ENCODE measurements at regions of chr6 and their contacts with region 1.

Region 1: GRCh38 chr6:148166339-148166968 is 176.2 kb upstream of the SASH1 start:
- DNase-seq: peak in 1 of 2 experiments; percentile 58
- H3K4me3 ChIP-seq: no peak overlapping the region
- H3K27ac ChIP-seq: no peak overlapping the region
- H3K4me1 ChIP-seq: no peaks in the 10 kb centered on the region
- H3K27me3 ChIP-seq: no peaks in the 10 kb centered on the region
- CTCF ChIP-seq: peak; percentile 83

Region 2: GRCh38 chr6:147390909-147391536 is 775.4 kb before region 1 on chr6:
- CTCF ChIA-PET with region 1: no interaction called
- POLR2A ChIA-PET with region 1: no interaction called
- intact Hi-C with region 1: loop called (anchors 5 kb)
- DNase-seq: peak in 1 of 2 experiments; percentile 4
- H3K4me3 ChIP-seq: no peak overlapping the region
- H3K27ac ChIP-seq: no peak overlapping the region
- H3K4me1 ChIP-seq: no peaks in the 10 kb centered on the region
- H3K27me3 ChIP-seq: no peaks in the 10 kb centered on the region
- CTCF ChIP-seq: peak; percentile 68

Region 3: GRCh38 chr6:147922799-147923198 is 243.7 kb before region 1 on chr6:
- CTCF ChIA-PET with region 1: no interaction called
- POLR2A ChIA-PET with region 1: no interaction called
- intact Hi-C with region 1: no loop called
- DNase-seq: no peak
- H3K4me3 ChIP-seq: no peak overlapping the region
- H3K27ac ChIP-seq: no peak overlapping the region
- H3K4me1 ChIP-seq: no peaks in the 10 kb centered on the region
- H3K27me3 ChIP-seq: no peaks in the 10 kb centered on the region
- CTCF ChIP-seq: no peak

Region 4: DNA sequence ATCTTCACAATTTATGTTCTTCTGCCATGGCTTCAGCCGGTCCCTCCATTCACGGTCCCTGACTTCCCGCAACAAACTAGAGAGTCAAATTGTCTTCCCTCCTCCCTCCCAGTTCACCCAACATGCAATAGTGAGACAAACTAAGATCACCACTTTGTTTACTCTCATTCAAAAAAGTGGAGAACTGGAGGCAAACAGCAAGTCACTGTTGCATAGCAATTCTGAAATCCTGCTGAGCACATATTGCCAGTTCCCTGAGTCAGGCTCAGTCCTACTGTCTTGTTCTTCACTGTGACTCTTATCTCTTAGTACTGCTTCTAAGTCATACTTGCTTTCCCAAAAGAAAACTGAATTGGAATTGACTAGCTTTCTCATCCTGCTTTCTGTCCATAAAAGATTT is 111.0 kb before region 1 on chr6:
- CTCF ChIA-PET with region 1: no interaction called
- POLR2A ChIA-PET with region 1: no interaction called
- intact Hi-C with region 1: no loop called
- DNase-seq: no peak
- H3K4me3 ChIP-seq: no peak overlapping the region
- H3K27ac ChIP-seq: peak overlapping the region; percentile 36; the same call in 1 of the 2 replicates
- H3K4me1 ChIP-seq: no peaks in the 10 kb centered on the region
- H3K27me3 ChIP-seq: no peaks in the 10 kb centered on the region
- CTCF ChIP-seq: no peak

Region 5: GRCh38 chr6:148240461-148240840 is 74.0 kb after region 1 on chr6:
- CTCF ChIA-PET with region 1: no interaction called
- POLR2A ChIA-PET with region 1: no interaction called
- intact Hi-C with region 1: no loop called
- DNase-seq: no peak
- H3K4me3 ChIP-seq: no peak overlapping the region
- H3K27ac ChIP-seq: no peak overlapping the region
- H3K4me1 ChIP-seq: no peaks in the 10 kb centered on the region
- H3K27me3 ChIP-seq: no peaks in the 10 kb centered on the region
- CTCF ChIP-seq: no peak

Measured in PC-9 (cell line).